ENCODE measurements at regions of chr1 and their contacts with region 1.

Region 1: GRCh38 chr1:89358287-89358893 is 5.5 kb upstream of the GBP6 start:
- DNase-seq: peak; percentile 80
- H3K4me3 ChIP-seq: no peak overlapping the region
- H3K27ac ChIP-seq: no peak overlapping the region
- H3K4me1 ChIP-seq: no peaks in the 10 kb centered on the region
- H3K27me3 ChIP-seq: no peaks in the 10 kb centered on the region
- CTCF ChIP-seq: peak; percentile 85

Region 2: DNA sequence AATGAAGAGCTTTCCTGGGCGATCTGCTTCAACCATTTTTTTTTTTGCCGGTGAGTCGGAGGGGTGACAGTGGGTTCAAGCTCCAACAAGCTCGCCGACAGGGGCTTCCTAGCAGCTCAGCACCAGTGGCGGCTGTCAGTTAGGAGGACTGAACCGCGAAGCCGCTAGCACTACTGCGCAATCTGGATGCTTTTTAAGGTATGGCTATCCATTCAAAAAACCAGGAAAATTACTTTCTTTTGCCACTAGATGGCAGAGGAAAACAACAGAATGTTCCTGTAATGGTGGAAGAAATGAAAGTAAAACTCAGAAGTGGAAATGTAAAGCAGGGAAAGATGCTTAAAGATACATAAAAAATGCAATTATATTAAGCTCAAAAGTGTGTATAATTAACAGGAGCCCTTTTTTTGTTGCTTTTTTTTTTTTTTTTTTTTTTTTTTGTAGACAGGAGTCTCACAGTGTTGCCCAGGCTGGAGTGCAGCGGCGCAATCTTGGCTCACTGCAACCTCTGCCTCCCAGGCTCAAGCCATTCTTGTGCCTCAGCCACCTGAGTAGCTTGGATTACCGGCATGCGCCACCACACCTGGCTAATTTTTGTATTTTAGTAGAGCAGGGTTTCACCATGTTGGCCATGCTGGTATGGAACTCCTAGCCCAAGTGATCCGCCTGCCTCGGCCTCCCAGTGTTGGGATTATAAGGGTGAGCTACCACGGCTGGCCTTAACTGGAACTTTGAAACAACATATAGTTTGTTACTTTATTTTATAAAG is 374.4 kb before region 1 on chr1:
- CTCF ChIA-PET with region 1: no interaction called
- POLR2A ChIA-PET with region 1: no interaction called
- intact Hi-C with region 1: loop called (anchors 5 kb)
- DNase-seq: peak; percentile 87
- H3K4me3 ChIP-seq: peak overlapping the region; percentile 28
- H3K27ac ChIP-seq: peak overlapping the region; percentile 77
- H3K4me1 ChIP-seq: peaks cover 22% of the 10 kb centered on the region
- H3K27me3 ChIP-seq: no peaks in the 10 kb centered on the region
- CTCF ChIP-seq: peak; percentile 69

Region 3: DNA sequence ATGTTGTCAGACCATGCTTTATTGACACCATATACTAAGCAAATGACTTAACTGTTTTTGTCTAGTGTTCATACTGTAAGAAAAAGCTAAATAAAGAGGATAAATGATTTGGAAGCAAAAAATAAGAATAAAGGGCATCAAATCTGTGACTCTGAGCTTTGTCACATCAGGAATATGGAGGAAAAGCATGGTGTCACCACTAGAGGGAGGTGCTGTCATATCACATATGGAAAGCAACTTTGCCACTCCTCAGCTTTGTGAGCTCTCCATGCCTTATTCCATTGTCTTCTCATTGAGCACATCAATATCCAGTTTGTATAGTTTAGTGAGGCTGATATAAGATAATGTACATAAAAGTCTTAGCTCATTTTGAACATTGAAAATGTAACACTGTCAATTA is 272.6 kb before region 1 on chr1:
- CTCF ChIA-PET with region 1: interaction called, 8 read pairs
- POLR2A ChIA-PET with region 1: no interaction called
- intact Hi-C with region 1: loop called (anchors 1 kb)
- DNase-seq: peak; percentile 78
- H3K4me3 ChIP-seq: no peak overlapping the region
- H3K27ac ChIP-seq: no peak overlapping the region
- H3K4me1 ChIP-seq: no peaks in the 10 kb centered on the region
- H3K27me3 ChIP-seq: no peaks in the 10 kb centered on the region
- CTCF ChIP-seq: peak; percentile 87

Region 4: GRCh38 chr1:89708751-89709375 is 350.5 kb after region 1 on chr1:
- CTCF ChIA-PET with region 1: no interaction called
- POLR2A ChIA-PET with region 1: no interaction called
- intact Hi-C with region 1: no loop called
- DNase-seq: peak; percentile 38
- H3K4me3 ChIP-seq: no peak overlapping the region
- H3K27ac ChIP-seq: no peak overlapping the region
- H3K4me1 ChIP-seq: peaks cover 21% of the 10 kb centered on the region
- H3K27me3 ChIP-seq: no peaks in the 10 kb centered on the region
- CTCF ChIP-seq: no peak